Right ventricle myocardium inferior (tissue), 1 donor: ENCODE measurements at regions of chr7 and their contacts with region 1.

Region 1: GRCh38 chr7:37181550-37181932 is 267.1 kb downstream of the ELMO1 start:
- DNase-seq: no peak
- ATAC-seq: no peak

Region 2: DNA sequence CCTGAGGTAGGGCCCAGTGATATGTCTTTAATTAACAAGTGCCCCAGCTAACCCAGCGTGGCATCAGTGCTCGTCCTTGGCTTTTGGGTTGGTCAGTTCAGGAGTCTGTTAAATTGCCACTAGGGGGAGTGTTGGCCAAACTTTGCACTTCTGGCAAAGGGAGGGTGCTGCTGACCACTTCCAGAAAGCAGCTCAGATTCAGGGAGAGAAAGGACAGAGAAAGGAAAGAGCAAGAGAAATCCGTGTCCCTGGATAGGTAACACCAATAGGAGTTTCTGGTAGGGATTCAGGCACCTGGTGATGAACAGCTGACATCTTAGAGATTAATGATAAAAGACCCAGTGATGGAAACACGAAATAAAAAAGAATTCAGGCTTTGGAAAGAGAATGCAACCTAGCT is 214.2 kb before region 1 on chr7:
- intact Hi-C with region 1: loop called (anchors 1 kb)
- DNase-seq: no peak
- ATAC-seq: peak; percentile 94

Region 3: DNA sequence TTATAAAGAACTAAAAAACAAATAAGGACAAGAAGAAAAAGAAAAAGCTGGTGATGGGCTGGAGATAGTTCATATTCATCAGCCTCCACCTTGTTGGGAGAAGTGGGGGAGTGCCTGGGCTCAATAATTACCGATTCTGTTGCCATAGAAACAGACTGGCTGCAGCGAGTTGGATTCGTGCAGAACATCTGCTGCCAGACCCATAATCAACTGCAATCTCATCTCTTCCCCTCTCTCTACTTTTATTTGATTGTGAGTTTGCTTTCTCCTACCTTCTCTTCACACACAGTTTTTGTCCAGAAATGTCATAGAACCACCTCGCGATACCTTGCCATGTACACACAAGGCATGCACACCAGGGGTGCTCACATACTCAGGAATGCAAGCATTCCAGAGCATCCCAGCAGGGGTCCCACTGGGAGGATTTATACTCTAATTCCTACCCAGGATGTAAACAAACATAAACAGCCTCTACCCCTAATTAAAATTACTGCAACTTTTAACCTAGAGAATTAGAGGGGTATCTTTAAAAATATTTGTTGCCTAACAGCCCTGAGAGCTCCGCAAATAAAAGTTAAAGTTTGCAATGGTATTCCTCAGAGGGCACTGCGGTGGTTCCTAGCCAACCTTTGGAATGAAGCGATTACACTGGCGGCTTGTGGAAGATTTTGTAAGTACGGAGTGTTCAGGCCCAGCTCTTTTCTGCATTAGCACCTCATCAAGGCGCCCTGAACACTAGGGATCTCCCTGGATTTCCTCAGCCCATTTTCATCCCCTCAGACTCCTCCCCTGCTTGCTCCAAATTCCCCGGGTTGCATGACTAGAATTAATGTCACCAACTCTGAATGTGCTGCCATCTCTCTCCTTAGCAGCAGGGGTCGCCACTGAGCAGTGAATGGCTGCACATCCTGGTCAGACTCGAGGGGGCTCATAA is 194.8 kb before region 1 on chr7:
- intact Hi-C with region 1: loop called (anchors 2 kb)
- DNase-seq: no peak
- ATAC-seq: peak; percentile 64